ENCODE measurements at regions of chr15 and their contacts with region 1.

Region 1: GRCh38 chr15:75042730-75043508 is 19.5 kb downstream of the PPCDC start:
- DNase-seq: peak; percentile 96
- H3K4me3 Mint-ChIP-seq: peak overlapping the region; percentile 13
- H3K27ac Mint-ChIP-seq: peak overlapping the region; percentile 94
- H3K4me1 Mint-ChIP-seq: peaks cover 88% of the 10 kb centered on the region
- H3K27me3 Mint-ChIP-seq: no peaks in the 10 kb centered on the region
- CTCF ChIP-seq: peak; percentile 72

Region 2: DNA sequence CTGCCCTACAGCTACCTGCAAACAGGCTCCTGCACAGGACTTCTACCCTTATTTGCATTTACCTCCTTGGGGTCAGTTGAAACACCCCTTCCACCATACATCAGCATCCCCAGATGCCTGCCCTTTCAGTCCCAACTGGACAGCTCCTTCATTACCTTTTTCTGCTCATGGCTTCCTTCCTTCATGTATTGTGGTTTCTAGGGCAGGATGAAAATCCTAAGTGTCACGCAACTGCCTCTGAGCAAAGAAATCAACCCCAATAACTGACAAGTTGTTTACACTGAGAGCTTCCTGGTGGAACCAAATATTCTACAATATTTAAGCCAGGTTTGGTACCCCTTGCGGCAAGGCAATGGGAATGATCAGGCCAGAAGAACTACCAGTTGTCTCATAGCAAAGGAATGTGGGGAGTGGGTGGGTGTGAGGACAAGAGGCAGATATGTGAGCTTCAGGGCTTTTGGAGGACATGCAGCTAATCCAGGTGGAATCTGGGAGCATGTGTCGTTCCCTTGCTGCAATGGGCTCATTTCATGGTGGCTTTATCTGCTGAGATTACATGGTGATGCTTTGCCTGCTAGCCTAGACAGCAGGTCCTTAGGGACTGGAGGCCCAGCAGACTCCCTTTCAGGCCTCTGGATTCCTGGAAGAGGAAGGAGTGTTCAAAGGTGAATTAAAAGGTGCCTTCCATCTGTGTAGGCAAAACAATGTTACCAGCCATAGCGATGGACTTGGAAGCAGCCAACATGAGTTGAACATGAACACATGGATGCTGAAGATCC is 15.4 kb after region 1 on chr15:
- CTCF ChIA-PET with region 1: interaction called, 16 read pairs
- intact Hi-C with region 1: no loop called
- DNase-seq: peak; percentile 47
- H3K4me3 Mint-ChIP-seq: peak overlapping the region; percentile 5
- H3K27ac Mint-ChIP-seq: peak overlapping the region; percentile 57
- H3K4me1 Mint-ChIP-seq: peaks cover 50% of the 10 kb centered on the region
- H3K27me3 Mint-ChIP-seq: no peaks in the 10 kb centered on the region
- CTCF ChIP-seq: no peak

Region 3: DNA sequence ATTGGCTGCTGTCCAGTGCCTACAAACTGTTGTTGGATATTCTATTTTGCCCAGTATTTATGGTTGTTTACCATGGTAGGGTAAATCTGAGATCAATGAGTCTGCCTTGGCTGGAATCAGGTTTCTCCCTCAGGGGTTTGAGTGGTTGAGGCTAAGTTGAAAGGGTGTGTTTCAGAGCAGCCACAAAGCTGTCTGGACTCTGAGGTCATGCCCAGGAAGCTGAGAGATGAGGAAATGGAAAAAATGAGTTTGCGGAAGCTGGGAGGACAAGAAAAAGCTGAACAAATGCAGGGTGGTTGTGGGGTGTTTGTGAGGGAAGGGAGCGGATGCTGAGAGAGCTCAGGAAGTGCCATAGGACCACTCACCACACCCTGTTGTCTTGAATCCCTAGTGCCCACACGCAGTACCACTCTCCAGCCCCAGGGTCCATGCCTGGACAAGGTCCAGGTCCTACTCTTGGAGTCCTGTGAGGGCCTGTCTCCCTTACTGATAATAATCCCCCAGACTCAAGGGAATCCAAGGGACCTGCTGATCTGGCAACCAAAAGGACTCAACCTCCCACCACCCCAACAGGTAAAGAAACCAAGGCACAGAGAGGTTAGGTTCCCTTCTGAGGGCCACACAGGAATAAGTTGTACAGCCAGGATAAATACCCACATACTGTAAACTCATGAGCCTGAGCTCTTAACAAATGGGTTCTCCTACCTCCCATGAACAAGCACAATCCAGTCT is 62.1 kb after region 1 on chr15:
- CTCF ChIA-PET with region 1: interaction called, 32 read pairs
- intact Hi-C with region 1: loop called (anchors 2 kb)
- DNase-seq: peak; percentile 93
- H3K4me3 Mint-ChIP-seq: peak overlapping the region; percentile 58
- H3K27ac Mint-ChIP-seq: peak overlapping the region; percentile 100
- H3K4me1 Mint-ChIP-seq: peaks cover 51% of the 10 kb centered on the region
- H3K27me3 Mint-ChIP-seq: peaks cover 13% of the 10 kb centered on the region
- CTCF ChIP-seq: no peak

Region 4: DNA sequence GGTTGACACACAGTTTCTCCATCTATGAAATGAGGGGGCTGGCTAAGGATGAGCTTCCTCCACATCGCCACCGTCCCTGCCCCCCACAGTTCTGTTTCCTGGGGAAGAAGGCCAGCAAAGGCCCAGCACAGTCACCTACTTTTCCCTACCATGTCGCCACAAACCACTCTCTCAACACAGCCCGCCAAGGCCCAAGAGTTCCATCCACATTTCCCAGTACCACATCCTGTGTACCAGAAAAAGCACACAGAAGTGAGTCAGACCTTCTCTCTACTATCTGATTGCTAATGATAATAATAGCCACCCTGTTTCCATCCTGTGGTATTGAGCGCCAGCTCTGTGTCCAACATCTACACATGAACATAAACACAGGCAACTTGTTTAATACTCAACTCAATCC is 128.5 kb after region 1 on chr15:
- CTCF ChIA-PET with region 1: interaction called, 20 read pairs
- intact Hi-C with region 1: no loop called
- DNase-seq: peak; percentile 35
- H3K4me3 Mint-ChIP-seq: no peak overlapping the region
- H3K27ac Mint-ChIP-seq: peak overlapping the region; percentile 74
- H3K4me1 Mint-ChIP-seq: peaks cover 43% of the 10 kb centered on the region
- H3K27me3 Mint-ChIP-seq: no peaks in the 10 kb centered on the region
- CTCF ChIP-seq: no peak

Region 5: GRCh38 chr15:75201609-75202250 is 158.8 kb after region 1 on chr15 and contains the start of gene C15orf39:
- CTCF ChIA-PET with region 1: interaction called, 119 read pairs
- intact Hi-C with region 1: loop called (anchors 1 kb)
- DNase-seq: peak; percentile 86
- H3K4me3 Mint-ChIP-seq: peak within 1 kb of the TSS; percentile 94
- H3K27ac Mint-ChIP-seq: peak within 1 kb of the TSS; percentile 79
- H3K4me1 Mint-ChIP-seq: peaks cover 54% of the 10 kb centered on the region
- H3K27me3 Mint-ChIP-seq: no peaks in the 10 kb centered on the region
- CTCF ChIP-seq: peak; percentile 92
- total RNA-seq, gene C15orf39: 77.2 and 86.5 TPM in 2 replicates

Region 6: DNA sequence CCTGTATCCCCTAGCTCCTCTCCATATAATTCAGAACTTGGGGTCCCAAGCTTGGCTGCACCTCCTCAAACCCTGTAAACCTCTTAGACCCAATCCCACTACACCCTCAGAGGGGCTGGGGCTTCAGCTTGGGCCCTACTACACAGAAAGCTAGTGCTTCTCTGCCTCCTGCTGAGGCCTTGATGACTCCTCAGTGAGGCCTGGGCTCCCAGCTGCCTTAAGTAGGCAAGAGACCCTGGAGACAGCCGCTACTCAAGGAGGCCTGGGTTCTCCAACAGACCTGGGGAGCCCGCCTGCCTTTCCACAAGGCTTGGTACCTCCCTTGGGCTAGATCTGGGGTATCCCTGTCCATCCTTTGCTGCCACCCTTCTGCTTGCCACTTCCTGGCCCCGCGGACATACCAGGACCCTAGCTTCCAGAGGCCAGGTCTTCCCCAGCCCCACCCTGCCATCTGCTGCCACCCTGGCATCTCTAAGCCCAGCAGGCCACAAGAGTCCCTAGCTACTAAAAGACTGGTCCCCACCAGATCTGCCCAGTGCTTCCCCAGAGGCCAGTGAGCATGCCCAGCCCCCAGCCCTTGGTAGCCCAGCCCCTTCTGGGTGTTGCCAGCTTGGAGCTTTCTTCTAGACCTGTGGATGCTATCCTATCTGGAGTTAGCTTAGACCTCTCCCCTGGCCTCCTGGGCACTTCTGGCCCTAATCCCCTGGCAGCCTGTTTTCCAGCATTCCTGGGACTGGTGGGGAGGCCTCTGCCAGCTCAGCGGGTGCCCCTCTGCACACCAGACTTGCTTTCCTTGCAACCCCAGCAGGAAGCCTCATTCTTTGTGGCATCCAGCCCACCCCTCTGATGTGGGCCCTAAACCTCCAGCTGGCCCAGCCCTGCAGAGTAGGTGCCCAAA is 172.4 kb after region 1 on chr15:
- CTCF ChIA-PET with region 1: interaction called, 17 read pairs
- intact Hi-C with region 1: no loop called
- DNase-seq: peak; percentile 56
- H3K4me3 Mint-ChIP-seq: peak overlapping the region; percentile 17
- H3K27ac Mint-ChIP-seq: peak overlapping the region; percentile 74
- H3K4me1 Mint-ChIP-seq: peaks cover 25% of the 10 kb centered on the region
- H3K27me3 Mint-ChIP-seq: no peaks in the 10 kb centered on the region
- CTCF ChIP-seq: no peak